Naive thymus-derived CD4-positive, alpha-beta T cell (primary cell): ENCODE measurements at regions of chr1 and their contacts with region 1.

Region 1: GRCh38 chr1:42958488-42959319 is at the start of gene SLC2A1:
- DNase-seq: peak; percentile 84 to 95 (median 92)
- ATAC-seq: peak; percentile 96
- H3K4me3 ChIP-seq: peak within 1 kb of the TSS; percentile 96
- H3K4me3 Mint-ChIP-seq: peak within 1 kb of the TSS; percentile 95 to 99 (median 98)
- H3K27ac ChIP-seq: peak within 1 kb of the TSS; percentile 88
- H3K27ac Mint-ChIP-seq: peak within 1 kb of the TSS; percentile 94 to 99 (median 97)
- H3K4me1 ChIP-seq: peaks cover 34 to 40% of the 10 kb centered on the region in 2 donors
- H3K4me1 Mint-ChIP-seq: peaks cover 44 to 65% (median 56%) of the 10 kb centered on the region in 7 donors
- H3K27me3 ChIP-seq: no peaks in the 10 kb centered on the region
- H3K27me3 Mint-ChIP-seq: peaks cover 0 to 18% (median 0%) of the 10 kb centered on the region in 5 donors
- total RNA-seq, gene SLC2A1: 43.6 to 123 (median 73.1) TPM

Region 2: DNA sequence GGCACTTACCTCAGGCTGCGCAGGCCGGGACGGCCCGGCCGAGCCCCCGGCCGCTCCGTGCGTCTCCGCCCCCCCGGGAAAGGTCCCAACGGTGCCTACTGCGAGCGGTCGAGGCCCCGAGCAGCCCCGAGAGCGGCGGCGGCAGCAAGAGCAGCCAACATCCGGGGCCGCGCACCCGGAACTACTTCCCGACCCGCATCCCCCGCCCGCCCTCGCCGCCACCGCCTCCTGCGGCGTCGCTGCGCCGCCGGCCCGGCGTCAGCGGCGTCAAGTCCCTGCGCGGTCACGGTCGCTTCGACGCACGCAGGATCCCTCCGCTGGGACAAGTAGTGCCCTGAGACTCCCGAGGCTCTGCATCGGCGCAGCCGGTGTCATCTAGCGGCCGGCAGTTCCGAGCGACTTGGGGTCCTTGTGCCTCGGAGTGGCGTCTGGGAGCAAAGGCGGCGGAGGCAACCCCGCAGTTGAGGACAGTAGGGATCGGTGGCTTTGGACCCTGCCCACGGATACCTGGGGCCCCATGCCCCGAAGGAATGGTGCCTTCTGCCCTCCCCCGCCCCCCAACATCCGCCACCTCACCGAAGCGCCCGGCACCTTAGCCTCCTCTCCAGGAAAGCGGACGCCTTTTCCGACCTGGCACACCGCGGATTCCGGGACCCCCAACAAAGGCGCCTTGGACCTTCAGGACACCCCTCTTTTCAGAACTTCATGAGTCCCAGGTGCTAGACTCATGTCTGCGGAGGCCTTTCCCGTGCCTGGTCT is 623.5 kb before region 1 on chr1 and contains the start of gene FOXJ3:
- CTCF ChIA-PET with region 1: no interaction called
- POLR2A ChIA-PET with region 1: no interaction called
- intact Hi-C with region 1: loop called (anchors 1 kb)
- DNase-seq: peak; percentile 83 to 93 (median 91)
- ATAC-seq: peak; percentile 96
- H3K4me3 ChIP-seq: peak within 1 kb of the TSS; percentile 94
- H3K4me3 Mint-ChIP-seq: peak within 1 kb of the TSS; percentile 84 to 96 (median 94)
- H3K27ac ChIP-seq: peak within 1 kb of the TSS; percentile 90
- H3K27ac Mint-ChIP-seq: peak within 1 kb of the TSS; percentile 83 to 97 (median 92)
- H3K4me1 ChIP-seq: peaks cover 16 to 19% of the 10 kb centered on the region in 2 donors
- H3K4me1 Mint-ChIP-seq: peaks cover 42 to 65% (median 56%) of the 10 kb centered on the region in 7 donors
- H3K27me3 ChIP-seq: no peaks in the 10 kb centered on the region
- H3K27me3 Mint-ChIP-seq: peaks cover 0 to 3% (median 0%) of the 10 kb centered on the region in 5 donors
- total RNA-seq, gene FOXJ3: 59.5 to 93.3 (median 76.5) TPM

Region 3: DNA sequence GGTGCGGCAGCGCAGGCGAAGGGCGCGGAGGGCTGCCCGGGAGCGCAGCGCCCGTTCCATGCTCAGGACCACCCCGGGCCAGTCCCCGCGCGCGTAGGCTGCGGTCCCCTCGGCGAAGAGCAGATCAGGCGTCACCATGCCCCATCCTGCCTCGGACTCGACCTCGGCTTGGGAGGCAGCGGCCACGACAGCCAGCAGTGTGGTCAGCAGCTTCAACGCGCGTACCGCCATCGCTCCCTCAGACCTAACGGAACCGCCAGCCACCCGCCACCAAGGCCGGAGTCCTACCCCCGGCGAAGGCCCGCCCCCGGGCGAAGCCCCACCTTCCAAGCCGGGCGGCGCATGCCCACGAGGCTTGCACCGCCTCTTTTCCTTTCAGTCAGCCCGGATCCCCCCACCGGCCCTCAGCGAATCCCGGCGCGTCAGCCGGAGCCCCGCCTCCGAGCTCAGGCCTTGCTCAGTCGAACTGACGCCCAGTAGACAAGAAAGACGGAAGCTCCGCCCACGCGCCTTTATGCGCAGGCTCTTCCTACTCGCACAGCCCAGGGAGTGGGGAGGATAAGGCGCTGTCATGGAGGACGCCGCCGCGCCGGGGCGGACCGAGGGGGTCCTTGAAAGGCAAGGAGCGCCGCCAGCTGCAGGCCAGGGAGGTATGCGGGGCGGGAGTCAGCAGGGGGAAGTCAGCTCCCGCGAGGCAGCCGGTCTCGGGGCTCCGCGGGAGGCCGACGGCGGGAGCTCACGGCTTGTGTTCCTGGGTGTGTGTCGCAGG is 191.8 kb before region 1 on chr1 and contains the starts of genes C1orf50 and P3H1:
- CTCF ChIA-PET with region 1: no interaction called
- POLR2A ChIA-PET with region 1: no interaction called
- intact Hi-C with region 1: loop called (anchors 1 kb)
- DNase-seq: peak; percentile 98 to 100 (median 100)
- ATAC-seq: peak; percentile 96
- H3K4me3 ChIP-seq: peak within 1 kb of the TSS; percentile 91
- H3K4me3 Mint-ChIP-seq: peak within 1 kb of the TSS in 1 of 10 donors; percentile 92
- H3K27ac ChIP-seq: peak within 1 kb of the TSS; percentile 84
- H3K27ac Mint-ChIP-seq: peak within 1 kb of the TSS in 8 of 9 donors; percentile 70 to 96 (median 92)
- H3K4me1 ChIP-seq: peaks cover 25 to 35% of the 10 kb centered on the region in 2 donors
- H3K4me1 Mint-ChIP-seq: peaks cover 20 to 50% (median 32%) of the 10 kb centered on the region in 7 donors
- H3K27me3 ChIP-seq: no peaks in the 10 kb centered on the region
- H3K27me3 Mint-ChIP-seq: no peaks in the 10 kb centered on the region
- total RNA-seq, gene C1orf50: 7.0 to 20.8 (median 18.1) TPM
- total RNA-seq, gene P3H1: 32.5 to 61.8 (median 47.3) TPM

Region 4: GRCh38 chr1:42825036-42825851 is 133.5 kb before region 1 on chr1:
- CTCF ChIA-PET with region 1: no interaction called
- POLR2A ChIA-PET with region 1: no interaction called
- intact Hi-C with region 1: no loop called
- DNase-seq: no peak
- ATAC-seq: no peak
- H3K4me3 ChIP-seq: no peak overlapping the region
- H3K4me3 Mint-ChIP-seq: no peak overlapping the region
- H3K27ac ChIP-seq: no peak overlapping the region
- H3K27ac Mint-ChIP-seq: no peak overlapping the region
- H3K4me1 ChIP-seq: no peaks in the 10 kb centered on the region
- H3K4me1 Mint-ChIP-seq: peaks cover 0 to 8% (median 6%) of the 10 kb centered on the region in 7 donors
- H3K27me3 ChIP-seq: no peaks in the 10 kb centered on the region
- H3K27me3 Mint-ChIP-seq: peaks cover 0 to 6% (median 0%) of the 10 kb centered on the region in 5 donors

Region 5: DNA sequence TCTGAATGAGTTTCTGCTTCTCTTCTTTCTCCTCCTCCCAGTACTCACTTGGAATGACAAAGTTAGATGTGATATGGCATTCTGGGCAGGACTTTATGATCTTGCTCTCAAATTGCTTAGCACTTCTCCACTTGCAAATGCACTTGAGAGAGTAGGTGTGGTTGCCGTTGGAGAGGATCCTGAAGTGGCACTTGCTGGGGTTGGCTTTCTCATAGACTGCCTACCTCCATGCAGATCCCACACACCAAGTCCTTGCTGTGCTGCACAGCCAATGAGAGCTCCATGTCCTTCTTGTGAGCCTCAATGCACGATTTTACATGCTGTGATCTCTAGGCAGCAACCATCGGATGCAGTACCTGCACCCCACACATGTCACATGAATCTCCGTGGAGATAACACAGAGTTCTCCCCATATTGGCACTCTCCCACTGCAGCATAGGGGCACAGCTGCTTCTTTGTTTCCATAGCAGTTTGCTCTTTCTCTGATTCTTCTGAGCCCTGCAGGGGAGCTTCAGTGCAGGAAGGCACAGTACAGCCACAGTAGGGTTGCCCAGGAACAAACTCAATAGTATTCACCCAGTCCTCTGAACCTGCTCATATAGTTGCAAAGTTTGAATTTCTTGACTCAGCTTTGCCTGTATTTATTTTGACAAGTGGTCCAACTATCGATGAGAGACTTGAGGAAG is 67.1 kb before region 1 on chr1:
- CTCF ChIA-PET with region 1: no interaction called
- POLR2A ChIA-PET with region 1: no interaction called
- intact Hi-C with region 1: no loop called
- DNase-seq: no peak
- ATAC-seq: no peak
- H3K4me3 ChIP-seq: no peak overlapping the region
- H3K4me3 Mint-ChIP-seq: no peak overlapping the region
- H3K27ac ChIP-seq: no peak overlapping the region
- H3K27ac Mint-ChIP-seq: no peak overlapping the region
- H3K4me1 ChIP-seq: no peaks in the 10 kb centered on the region
- H3K4me1 Mint-ChIP-seq: no peaks in the 10 kb centered on the region
- H3K27me3 ChIP-seq: no peaks in the 10 kb centered on the region
- H3K27me3 Mint-ChIP-seq: peaks cover 0 to 21% (median 0%) of the 10 kb centered on the region in 5 donors

Region 6: DNA sequence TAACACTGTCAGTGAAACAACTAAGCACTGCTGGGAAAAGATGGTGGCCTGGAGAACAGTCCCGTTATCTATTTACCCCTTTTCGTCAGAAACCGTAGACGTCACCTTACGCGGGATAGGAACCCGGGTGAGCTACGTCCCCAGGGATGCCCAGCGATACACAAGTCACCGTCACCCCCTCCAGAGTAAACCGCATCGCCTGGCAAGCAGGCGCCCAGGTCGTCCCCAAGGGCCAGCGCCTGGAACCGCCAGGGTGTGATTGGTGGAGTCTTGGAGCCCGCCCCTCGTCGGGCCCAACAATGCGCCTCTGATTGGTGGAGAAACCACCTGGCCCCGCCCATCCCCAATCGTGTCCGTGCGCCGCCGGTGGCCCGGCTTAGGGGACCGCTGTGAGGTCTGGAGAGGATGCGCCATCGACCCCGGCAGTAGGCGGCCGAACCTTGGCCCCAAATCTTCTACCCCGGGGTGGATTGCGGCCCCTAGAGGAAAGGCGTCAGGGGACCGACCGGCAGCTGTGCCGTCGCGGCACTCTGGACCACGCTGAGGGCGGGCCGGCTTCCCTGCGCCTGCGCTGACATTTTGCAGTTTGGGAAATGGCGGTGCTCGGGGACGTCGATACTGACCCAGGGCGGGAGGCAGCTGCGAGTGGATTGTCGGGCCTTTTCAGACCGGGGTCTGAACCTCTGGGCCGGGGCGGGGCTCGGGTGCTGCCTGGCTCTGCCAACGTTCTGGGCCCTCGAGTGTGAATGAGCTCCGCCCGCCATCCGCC is 34.4 kb before region 1 on chr1:
- CTCF ChIA-PET with region 1: interaction called, 8 read pairs
- POLR2A ChIA-PET with region 1: interaction called, 134 read pairs
- intact Hi-C with region 1: loop called (anchors 1 kb)
- DNase-seq: peak; percentile 85 to 93 (median 92)
- ATAC-seq: peak; percentile 96
- H3K4me3 ChIP-seq: peak overlapping the region; percentile 99
- H3K4me3 Mint-ChIP-seq: peak overlapping the region; percentile 77 to 98 (median 92)
- H3K27ac ChIP-seq: peak overlapping the region; percentile 82
- H3K27ac Mint-ChIP-seq: peak overlapping the region; percentile 79 to 98 (median 96)
- H3K4me1 ChIP-seq: peaks cover 15 to 16% of the 10 kb centered on the region in 2 donors
- H3K4me1 Mint-ChIP-seq: peaks cover 16 to 50% (median 39%) of the 10 kb centered on the region in 7 donors
- H3K27me3 ChIP-seq: no peaks in the 10 kb centered on the region
- H3K27me3 Mint-ChIP-seq: no peaks in the 10 kb centered on the region

Region 7: GRCh38 chr1:42941640-42942330 is 16.9 kb before region 1 on chr1:
- CTCF ChIA-PET with region 1: no interaction called
- POLR2A ChIA-PET with region 1: interaction called, 92 read pairs
- intact Hi-C with region 1: loop called (anchors 1 kb)
- DNase-seq: peak in 1 of 9 donors; percentile 3
- ATAC-seq: no peak
- H3K4me3 ChIP-seq: no peak overlapping the region
- H3K4me3 Mint-ChIP-seq: peak overlapping the region in 4 of 10 donors; percentile 9 to 78 (median 65)
- H3K27ac ChIP-seq: no peak overlapping the region
- H3K27ac Mint-ChIP-seq: peak overlapping the region in 8 of 9 donors; percentile 69 to 95 (median 86)
- H3K4me1 ChIP-seq: peaks cover 82 to 95% of the 10 kb centered on the region in 2 donors
- H3K4me1 Mint-ChIP-seq: peaks cover 85 to 99% (median 97%) of the 10 kb centered on the region in 7 donors
- H3K27me3 ChIP-seq: no peaks in the 10 kb centered on the region
- H3K27me3 Mint-ChIP-seq: no peaks in the 10 kb centered on the region

Region 8: GRCh38 chr1:43946236-43947060 is 987.7 kb after region 1 on chr1 and contains the start of gene IPO13:
- CTCF ChIA-PET with region 1: no interaction called
- POLR2A ChIA-PET with region 1: no interaction called
- intact Hi-C with region 1: loop called in 1 of 2 experiments (anchors 5 kb)
- DNase-seq: peak; percentile 92 to 99 (median 96)
- ATAC-seq: peak; percentile 98
- H3K4me3 ChIP-seq: peak within 1 kb of the TSS; percentile 86
- H3K4me3 Mint-ChIP-seq: peak within 1 kb of the TSS; percentile 87 to 96 (median 90)
- H3K27ac ChIP-seq: peak within 1 kb of the TSS; percentile 97
- H3K27ac Mint-ChIP-seq: peak within 1 kb of the TSS; percentile 84 to 98 (median 94)
- H3K4me1 ChIP-seq: peaks cover 17% of the 10 kb centered on the region in 2 donors
- H3K4me1 Mint-ChIP-seq: peaks cover 37 to 68% (median 56%) of the 10 kb centered on the region in 7 donors
- H3K27me3 ChIP-seq: no peaks in the 10 kb centered on the region
- H3K27me3 Mint-ChIP-seq: no peaks in the 10 kb centered on the region
- total RNA-seq, gene IPO13: 10.1 to 32.3 (median 17.0) TPM